ENCODE measurements at regions of chr11 and their contacts with region 1.

Region 1: DNA sequence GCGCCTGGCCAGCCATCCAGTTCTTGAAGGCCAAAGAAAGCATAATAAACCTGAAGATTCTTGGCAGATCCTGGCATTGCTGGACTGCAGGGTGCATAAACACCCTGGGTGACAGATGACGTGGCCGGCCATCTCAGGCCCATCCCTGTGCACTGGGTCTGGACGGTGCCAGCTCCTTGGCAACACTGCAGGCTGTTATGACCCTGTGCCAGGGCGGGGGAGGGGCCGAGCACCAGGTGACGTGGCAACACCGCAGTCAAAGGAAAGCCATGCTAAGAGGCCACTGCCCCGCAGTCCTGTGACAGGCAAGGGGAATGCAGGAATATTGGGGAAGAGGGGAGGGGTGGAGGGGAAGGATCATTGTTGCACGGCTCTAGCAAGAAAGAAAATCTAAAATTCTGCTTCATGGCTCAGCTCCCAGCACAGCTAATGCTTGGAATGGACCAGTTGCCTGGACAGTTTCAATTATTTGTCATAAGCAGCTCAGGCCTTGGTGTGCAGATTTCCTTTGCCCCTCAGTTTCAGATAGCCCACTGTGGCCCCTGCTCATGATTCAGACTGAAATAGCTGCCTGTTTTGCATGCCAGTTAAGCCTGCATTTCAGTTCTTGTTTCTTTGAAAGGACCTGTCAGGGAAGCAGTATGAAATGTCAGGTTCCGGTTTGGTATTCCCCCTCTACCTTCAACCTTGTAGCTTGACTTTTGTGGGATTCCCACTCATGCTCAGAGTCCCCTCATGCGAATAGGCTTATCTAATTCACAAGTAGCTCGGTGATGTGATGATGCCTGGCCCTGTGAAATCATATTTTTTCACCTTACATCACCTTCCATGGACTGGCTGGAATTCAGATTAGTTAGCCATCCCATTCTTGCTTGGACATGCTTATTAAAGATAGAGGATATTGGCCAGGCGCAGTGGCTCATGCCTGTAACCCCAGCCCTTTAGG is 29.7 kb upstream of the DDX6 start:
- DNase-seq: peak; percentile 64 to 95
- H3K4me3 ChIP-seq: no peak overlapping the region
- H3K27ac ChIP-seq: peak overlapping the region; percentile 56 to 66
- H3K4me1 ChIP-seq: peaks cover 0 to 8% of the 10 kb centered on the region in 2 donors
- H3K27me3 ChIP-seq: no peaks in the 10 kb centered on the region
- CTCF ChIP-seq: no peak

Region 2: DNA sequence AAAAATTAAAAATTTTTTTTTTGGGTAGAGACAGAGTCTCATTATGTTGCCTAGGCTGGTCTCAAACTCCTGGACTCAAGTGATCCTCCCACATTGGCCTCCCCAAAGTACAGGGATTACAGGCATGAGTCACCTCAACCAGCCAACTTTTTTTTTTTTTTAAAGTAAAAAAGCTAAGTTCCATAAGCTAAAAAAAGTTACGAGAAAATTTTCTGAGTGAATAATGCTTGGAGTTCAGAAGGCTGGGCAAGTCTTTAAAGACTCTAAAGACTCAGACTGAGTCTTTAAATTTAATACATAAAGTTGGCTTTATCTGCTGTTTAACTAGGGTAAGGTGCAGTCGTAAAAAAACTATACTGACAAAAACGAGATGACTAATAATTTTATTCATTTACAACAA is 35.3 kb before region 1 on chr11:
- intact Hi-C with region 1: no loop called
- DNase-seq: no peak
- H3K4me3 ChIP-seq: peak overlapping the region; percentile 0 to 12
- H3K27ac ChIP-seq: peak overlapping the region; percentile 1 to 63
- H3K4me1 ChIP-seq: peaks cover 14 to 49% of the 10 kb centered on the region in 2 donors
- H3K27me3 ChIP-seq: no peaks in the 10 kb centered on the region
- CTCF ChIP-seq: no peak

Region 3: GRCh38 chr11:118841469-118842242 is 21.0 kb after region 1 on chr11:
- intact Hi-C with region 1: loop called (anchors 2 kb)
- DNase-seq: no peak
- H3K4me3 ChIP-seq: no peak overlapping the region
- H3K27ac ChIP-seq: peak overlapping the region in 1 of 2 donors; percentile 45
- H3K4me1 ChIP-seq: peaks cover 0 to 3% of the 10 kb centered on the region in 2 donors
- H3K27me3 ChIP-seq: no peaks in the 10 kb centered on the region
- CTCF ChIP-seq: no peak

Region 4: DNA sequence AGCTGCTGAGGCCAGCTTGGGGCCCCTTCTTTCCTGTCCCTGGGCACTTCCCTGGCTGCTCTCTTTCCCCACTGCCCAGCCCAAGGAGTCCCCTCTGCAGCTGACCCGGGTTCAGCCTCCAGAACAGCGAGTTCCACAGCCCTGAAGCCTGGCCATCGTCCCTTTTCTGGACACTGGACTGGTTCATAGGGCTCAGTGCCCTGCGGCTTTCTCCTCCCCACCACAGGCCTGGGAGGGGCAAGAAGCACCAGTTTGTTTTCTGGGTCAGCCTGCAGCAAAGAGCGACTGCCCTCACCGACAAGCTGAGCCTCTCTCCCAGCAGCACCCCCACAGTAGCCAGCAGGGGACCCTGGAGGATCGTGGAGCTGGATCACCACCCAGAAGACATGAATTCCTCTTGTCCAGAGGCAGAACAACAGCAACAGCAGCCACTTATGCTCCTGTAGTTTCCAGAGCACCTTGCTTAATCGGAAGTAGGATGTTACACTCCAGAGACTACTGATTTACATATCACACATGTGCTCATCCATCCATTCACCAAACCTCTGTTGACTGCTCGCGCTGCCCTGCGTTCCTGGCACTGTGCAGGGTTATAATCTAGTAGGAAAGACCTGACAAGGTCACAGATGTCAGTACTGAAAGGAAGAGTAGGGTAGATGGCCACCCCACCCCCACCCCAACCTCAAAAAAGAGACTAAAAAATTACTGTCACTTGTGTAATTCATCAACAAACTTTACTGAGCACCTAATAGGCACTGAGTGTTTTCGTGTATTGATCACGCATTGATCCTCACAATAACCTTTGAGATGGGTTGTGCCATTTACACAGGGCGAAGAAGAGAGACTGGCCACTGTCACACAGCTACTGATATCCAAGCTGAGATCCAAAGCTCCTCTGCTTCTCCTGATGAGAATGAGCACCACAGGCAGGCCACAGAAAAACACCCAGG is 50.0 kb after region 1 on chr11:
- intact Hi-C with region 1: loop called (anchors 5 kb)
- DNase-seq: peak in 1 of 2 donors; percentile 89
- H3K4me3 ChIP-seq: peak overlapping the region; percentile 28 to 42
- H3K27ac ChIP-seq: peak overlapping the region; percentile 90
- H3K4me1 ChIP-seq: peaks cover 5 to 15% of the 10 kb centered on the region in 2 donors
- H3K27me3 ChIP-seq: no peaks in the 10 kb centered on the region
- CTCF ChIP-seq: peak in 1 of 3 experiments; percentile 29

Region 5: GRCh38 chr11:118883368-118884071 is 62.8 kb after region 1 on chr11 and contains the start of gene CXCR5:
- intact Hi-C with region 1: no loop called
- DNase-seq: no peak
- H3K4me3 ChIP-seq: no peak within 1 kb of the TSS
- H3K27ac ChIP-seq: peak within 1 kb of the TSS; percentile 95 to 96
- H3K4me1 ChIP-seq: peaks cover 6 to 28% of the 10 kb centered on the region in 2 donors
- H3K27me3 ChIP-seq: no peaks in the 10 kb centered on the region
- CTCF ChIP-seq: peak in 1 of 3 experiments; percentile 10
- total RNA-seq, gene CXCR5: not detected

Measured in ascending aorta (tissue), 2 donors.